Activated CD4-positive, alpha-beta memory T cell treated with anti-CD3 and anti-CD28 coated beads for 36 hours (primary cell): ENCODE measurements at regions of chr10 and their contacts with region 1.

Region 1: GRCh38 chr10:89414146-89414878 is at the start of gene IFIT5:
- DNase-seq: peak; percentile 75
- H3K4me3 Mint-ChIP-seq: peak within 1 kb of the TSS; percentile 78
- H3K27ac Mint-ChIP-seq: peak within 1 kb of the TSS; percentile 94
- H3K4me1 Mint-ChIP-seq: peaks cover 48% of the 10 kb centered on the region
- H3K27me3 Mint-ChIP-seq: no peaks in the 10 kb centered on the region
- total RNA-seq, gene IFIT5: 10.1 to 10.9 TPM

Region 2: GRCh38 chr10:89079961-89080360 is 334.4 kb before region 1 on chr10:
- CTCF ChIA-PET with region 1: no interaction called
- POLR2A ChIA-PET with region 1: no interaction called
- intact Hi-C with region 1: loop called (anchors 5 kb)
- DNase-seq: no peak
- H3K4me3 Mint-ChIP-seq: no peak overlapping the region
- H3K27ac Mint-ChIP-seq: no peak overlapping the region
- H3K4me1 Mint-ChIP-seq: peaks cover 22% of the 10 kb centered on the region
- H3K27me3 Mint-ChIP-seq: no peaks in the 10 kb centered on the region

Region 3: DNA sequence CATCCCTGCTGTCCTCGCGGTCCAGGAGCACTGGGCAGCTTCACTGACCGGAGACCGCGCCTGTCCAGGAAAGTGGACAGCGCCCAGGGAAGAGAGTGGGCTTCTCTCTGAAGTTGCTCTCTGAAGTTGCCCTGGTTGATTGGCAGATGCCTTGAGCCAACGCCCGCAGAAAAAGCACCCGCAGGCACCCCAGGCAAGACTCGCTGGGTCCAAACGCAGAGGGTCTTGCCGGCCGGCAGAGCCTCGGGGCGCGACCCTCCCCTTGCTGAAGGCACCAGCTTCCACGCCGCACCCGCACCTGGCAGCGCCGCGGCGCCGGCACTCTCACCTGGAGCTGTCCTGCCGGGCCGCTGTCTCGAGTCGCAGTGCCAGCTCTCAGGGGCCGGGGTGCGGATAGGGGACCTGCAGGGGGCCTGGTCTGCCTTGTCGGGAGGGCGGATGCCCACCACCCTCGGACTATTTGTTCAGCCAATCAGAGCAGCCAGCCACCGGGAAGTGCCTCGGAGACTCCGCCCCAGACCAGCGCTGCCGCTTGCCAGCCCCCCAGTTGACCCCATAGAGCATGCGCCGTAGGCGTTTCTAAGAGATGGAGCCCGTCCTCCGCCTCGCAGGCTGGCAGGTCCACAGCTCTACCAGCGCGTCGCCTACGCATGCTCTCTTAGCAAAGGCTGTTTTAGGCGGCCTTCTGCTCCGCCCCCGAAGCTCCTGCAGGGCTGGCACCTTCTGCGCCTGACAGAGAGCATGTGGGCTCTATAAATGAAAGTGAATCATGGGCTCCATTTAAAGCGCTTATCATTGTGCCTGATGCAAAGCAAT is 162.7 kb before region 1 on chr10 and contains the start of gene LIPA:
- CTCF ChIA-PET with region 1: interaction called, 7 read pairs
- POLR2A ChIA-PET with region 1: interaction called, 3 read pairs
- intact Hi-C with region 1: loop called (anchors 1 kb)
- DNase-seq: peak; percentile 96
- H3K4me3 Mint-ChIP-seq: peak within 1 kb of the TSS; percentile 83
- H3K27ac Mint-ChIP-seq: peak within 1 kb of the TSS; percentile 46
- H3K4me1 Mint-ChIP-seq: peaks cover 30% of the 10 kb centered on the region
- H3K27me3 Mint-ChIP-seq: no peaks in the 10 kb centered on the region
- total RNA-seq, gene LIPA: 22.7 to 23.8 TPM

Region 4: GRCh38 chr10:89301721-89302445 is 112.4 kb before region 1 on chr10 and contains the start of gene IFIT2:
- CTCF ChIA-PET with region 1: interaction called, 3 read pairs
- POLR2A ChIA-PET with region 1: no interaction called
- intact Hi-C with region 1: loop called (anchors 2 kb)
- DNase-seq: peak; percentile 40
- H3K4me3 Mint-ChIP-seq: peak within 1 kb of the TSS; percentile 79
- H3K27ac Mint-ChIP-seq: peak within 1 kb of the TSS; percentile 68
- H3K4me1 Mint-ChIP-seq: peaks cover 32% of the 10 kb centered on the region
- H3K27me3 Mint-ChIP-seq: no peaks in the 10 kb centered on the region
- total RNA-seq, gene IFIT2: 26.6 to 27.7 TPM

Region 5: DNA sequence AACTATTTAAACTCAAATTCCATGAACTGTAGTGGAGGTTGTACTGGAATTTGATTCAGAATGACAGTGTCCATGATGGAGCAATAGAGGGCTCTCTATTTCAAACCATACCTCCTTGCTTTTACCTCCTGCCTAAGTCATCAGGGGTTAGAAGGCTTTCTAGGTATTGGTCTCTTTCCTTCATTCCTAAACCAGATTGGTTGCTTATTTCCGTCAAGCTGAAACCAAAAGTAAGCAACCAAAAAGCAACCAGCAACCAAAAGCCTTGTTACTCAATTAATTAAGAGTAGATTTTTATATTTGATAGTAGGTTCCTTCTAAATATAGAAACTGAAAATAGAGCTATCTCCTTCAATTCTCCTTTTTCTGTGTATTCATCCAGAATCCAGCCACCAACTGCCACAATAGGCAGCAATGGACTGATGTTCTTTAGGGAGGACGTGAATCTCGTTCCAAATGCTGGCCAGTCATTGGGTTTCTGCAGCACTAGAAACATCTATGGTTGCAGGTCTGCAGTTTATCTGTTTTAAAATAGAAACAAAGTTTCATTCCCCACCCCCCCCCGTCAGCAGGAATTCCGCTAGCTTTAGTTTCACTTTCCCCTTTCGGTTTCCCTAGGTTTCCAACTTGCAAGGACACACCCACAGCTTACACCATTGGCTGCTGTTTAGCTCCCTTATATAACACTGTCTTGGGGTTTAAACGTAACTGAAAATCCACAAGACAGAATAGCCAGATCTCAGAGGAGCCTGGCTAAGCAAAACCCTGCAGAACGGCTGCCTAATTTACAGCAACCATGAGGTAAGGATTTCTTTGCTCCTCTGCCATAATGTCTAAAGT is 22.2 kb before region 1 on chr10 and contains the start of gene IFIT1:
- CTCF ChIA-PET with region 1: interaction called, 3 read pairs
- POLR2A ChIA-PET with region 1: interaction called, 5 read pairs
- intact Hi-C with region 1: loop called (anchors 1 kb)
- DNase-seq: peak; percentile 47
- H3K4me3 Mint-ChIP-seq: peak within 1 kb of the TSS; percentile 74
- H3K27ac Mint-ChIP-seq: peak within 1 kb of the TSS; percentile 38
- H3K4me1 Mint-ChIP-seq: peaks cover 27% of the 10 kb centered on the region
- H3K27me3 Mint-ChIP-seq: no peaks in the 10 kb centered on the region
- total RNA-seq, gene IFIT1: 5.2 to 5.5 TPM

Region 6: GRCh38 chr10:89643431-89644331 is 229.4 kb after region 1 on chr10:
- CTCF ChIA-PET with region 1: no interaction called
- POLR2A ChIA-PET with region 1: no interaction called
- intact Hi-C with region 1: loop called (anchors 2 kb)
- DNase-seq: peak; percentile 81
- H3K4me3 Mint-ChIP-seq: no peak overlapping the region
- H3K27ac Mint-ChIP-seq: no peak overlapping the region
- H3K4me1 Mint-ChIP-seq: peaks cover 7% of the 10 kb centered on the region
- H3K27me3 Mint-ChIP-seq: no peaks in the 10 kb centered on the region

Region 7: DNA sequence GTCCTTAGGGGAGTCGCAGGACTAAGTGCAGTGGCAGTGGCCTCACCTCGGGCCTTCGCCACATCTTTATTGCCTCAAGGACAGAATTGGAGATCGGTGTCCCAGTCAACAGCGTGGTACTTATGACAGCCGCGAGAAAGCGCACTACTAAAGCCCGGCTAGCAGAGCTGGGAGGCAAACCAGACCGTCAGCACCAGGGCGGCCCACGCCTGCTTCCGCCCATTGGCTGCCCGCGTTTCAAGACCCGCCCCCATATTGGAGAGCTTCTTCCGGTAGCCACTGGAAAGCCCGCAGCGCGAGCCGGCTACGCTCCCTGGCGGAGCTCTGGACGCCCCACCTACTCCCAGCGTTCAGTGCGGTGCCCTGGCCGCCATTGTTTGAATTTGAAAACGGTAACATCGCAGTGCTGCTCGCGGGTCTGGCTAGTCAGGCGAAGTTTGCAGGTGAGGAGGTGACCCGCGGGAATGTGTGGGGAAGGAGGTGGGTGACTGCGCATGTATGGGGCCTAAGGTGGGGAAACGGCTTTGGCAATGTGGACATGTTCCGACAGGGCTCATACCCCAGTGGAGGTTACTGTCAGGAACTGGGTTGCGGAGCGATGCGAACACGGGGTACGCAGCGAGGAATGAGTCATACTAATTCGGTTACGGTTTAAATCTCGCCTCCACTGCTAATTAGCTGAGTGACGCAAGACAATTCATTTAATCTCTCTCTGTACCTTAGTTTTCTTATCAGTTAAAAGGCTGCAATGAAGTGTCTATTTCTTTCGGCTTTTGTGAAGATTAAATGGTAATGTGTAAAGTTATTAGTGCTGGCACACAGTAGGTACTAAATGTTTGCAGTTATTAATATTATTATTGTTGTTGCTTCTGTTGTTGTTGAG is 287.2 kb after region 1 on chr10 and contains the start of gene KIF20B:
- CTCF ChIA-PET with region 1: interaction called, 3 read pairs
- POLR2A ChIA-PET with region 1: interaction called, 3 read pairs
- intact Hi-C with region 1: loop called (anchors 2 kb)
- DNase-seq: peak; percentile 98
- H3K4me3 Mint-ChIP-seq: peak within 1 kb of the TSS; percentile 88
- H3K27ac Mint-ChIP-seq: peak within 1 kb of the TSS; percentile 95
- H3K4me1 Mint-ChIP-seq: peaks cover 35% of the 10 kb centered on the region
- H3K27me3 Mint-ChIP-seq: no peaks in the 10 kb centered on the region
- total RNA-seq, gene KIF20B: 65.3 to 65.6 TPM